Ascending aorta (tissue), 2 donors: ENCODE measurements at regions of chr2 and their contacts with region 1.

Region 1: DNA sequence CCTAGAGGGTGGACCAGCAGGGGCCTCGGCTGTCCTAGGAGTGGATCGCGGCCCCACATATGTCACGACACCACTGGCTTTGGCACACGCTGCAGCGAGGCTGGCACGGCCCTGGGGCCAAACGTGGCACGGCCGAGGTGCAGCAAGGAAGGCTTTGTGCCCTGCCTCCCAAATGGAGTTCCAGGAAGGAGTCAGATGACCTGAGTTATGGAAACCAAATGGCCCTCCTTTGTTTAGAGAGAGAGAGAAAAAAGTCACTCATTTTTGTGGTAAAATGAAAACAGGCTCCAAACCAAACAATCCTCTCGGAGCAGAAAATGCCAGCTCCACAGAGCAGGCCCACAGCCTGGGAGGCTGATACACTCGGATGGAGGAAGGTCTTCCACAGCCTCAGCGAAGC is 105.6 kb downstream of the ANTXR1 start:
- DNase-seq: peak in 1 of 2 donors; percentile 66
- H3K4me3 ChIP-seq: peak overlapping the region in 1 of 2 donors; percentile 28
- H3K27ac ChIP-seq: peak overlapping the region; percentile 90 to 91
- H3K4me1 ChIP-seq: peaks cover 16 to 68% of the 10 kb centered on the region in 2 donors
- H3K27me3 ChIP-seq: no peaks in the 10 kb centered on the region
- CTCF ChIP-seq: no peak

Region 2: DNA sequence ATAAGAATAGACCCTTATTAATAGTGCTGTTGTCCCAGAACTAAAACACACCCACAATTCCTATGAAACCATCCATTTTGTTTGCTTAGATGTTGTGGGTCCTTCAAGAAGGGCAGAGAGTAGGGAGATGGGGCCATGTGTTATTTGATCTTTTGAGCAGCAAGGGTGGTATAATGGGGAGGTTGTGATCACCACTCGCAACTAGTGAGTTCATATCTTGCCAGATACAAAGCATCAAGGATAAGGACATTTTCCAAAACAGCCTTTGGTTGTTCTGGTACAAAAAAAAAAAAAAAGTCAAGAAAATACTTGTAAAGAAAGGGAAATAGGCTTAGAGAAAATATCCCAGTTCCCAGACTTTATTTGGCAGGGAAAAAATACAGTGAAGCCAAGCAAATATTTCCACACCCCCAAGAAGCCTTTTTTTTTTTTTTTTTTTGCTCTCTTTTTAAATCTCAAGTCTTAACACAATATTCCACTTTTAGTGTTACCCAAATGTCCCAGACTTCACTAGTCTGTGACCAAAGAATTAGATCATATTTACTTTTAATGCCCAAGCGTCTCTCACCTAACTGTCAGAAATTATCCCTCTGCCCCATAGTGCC is 51.5 kb before region 1 on chr2:
- intact Hi-C with region 1: loop called (anchors 5 kb)
- DNase-seq: no peak
- H3K4me3 ChIP-seq: no peak overlapping the region
- H3K27ac ChIP-seq: peak overlapping the region; percentile 92
- H3K4me1 ChIP-seq: peaks cover 14 to 56% of the 10 kb centered on the region in 2 donors
- H3K27me3 ChIP-seq: no peaks in the 10 kb centered on the region
- CTCF ChIP-seq: no peak

Region 3: GRCh38 chr2:69095305-69095704 is 23.3 kb before region 1 on chr2:
- intact Hi-C with region 1: loop called (anchors 1 kb)
- DNase-seq: no peak
- H3K4me3 ChIP-seq: no peak overlapping the region
- H3K27ac ChIP-seq: peak overlapping the region; percentile 6 to 9
- H3K4me1 ChIP-seq: peaks cover 0 to 16% of the 10 kb centered on the region in 2 donors
- H3K27me3 ChIP-seq: no peaks in the 10 kb centered on the region
- CTCF ChIP-seq: no peak

Region 4: DNA sequence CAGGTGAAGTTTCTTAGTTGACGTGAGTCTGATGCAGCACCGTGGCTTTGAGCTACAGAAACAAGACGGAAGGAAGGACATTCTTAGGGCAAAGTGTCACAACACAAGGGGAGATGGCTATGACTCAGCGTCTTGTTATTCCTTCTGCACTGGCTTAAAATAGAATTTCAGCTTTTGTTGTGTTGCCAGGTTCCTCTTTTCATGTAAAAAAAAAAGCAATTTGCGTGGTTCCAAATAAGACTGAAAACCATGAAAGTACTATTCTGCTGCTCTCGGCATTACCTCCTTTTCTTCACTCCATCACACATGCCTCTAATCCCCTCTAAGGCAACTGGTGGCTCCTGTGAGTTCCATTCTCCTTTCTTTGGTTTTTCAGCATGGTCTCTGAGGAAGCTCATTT is 44.5 kb after region 1 on chr2:
- intact Hi-C with region 1: loop called (anchors 5 kb)
- DNase-seq: peak in 1 of 2 donors; percentile 75
- H3K4me3 ChIP-seq: peak overlapping the region; percentile 8 to 32
- H3K27ac ChIP-seq: peak overlapping the region; percentile 83 to 86
- H3K4me1 ChIP-seq: peaks cover 10 to 59% of the 10 kb centered on the region in 2 donors
- H3K27me3 ChIP-seq: no peaks in the 10 kb centered on the region
- CTCF ChIP-seq: no peak

Region 5: DNA sequence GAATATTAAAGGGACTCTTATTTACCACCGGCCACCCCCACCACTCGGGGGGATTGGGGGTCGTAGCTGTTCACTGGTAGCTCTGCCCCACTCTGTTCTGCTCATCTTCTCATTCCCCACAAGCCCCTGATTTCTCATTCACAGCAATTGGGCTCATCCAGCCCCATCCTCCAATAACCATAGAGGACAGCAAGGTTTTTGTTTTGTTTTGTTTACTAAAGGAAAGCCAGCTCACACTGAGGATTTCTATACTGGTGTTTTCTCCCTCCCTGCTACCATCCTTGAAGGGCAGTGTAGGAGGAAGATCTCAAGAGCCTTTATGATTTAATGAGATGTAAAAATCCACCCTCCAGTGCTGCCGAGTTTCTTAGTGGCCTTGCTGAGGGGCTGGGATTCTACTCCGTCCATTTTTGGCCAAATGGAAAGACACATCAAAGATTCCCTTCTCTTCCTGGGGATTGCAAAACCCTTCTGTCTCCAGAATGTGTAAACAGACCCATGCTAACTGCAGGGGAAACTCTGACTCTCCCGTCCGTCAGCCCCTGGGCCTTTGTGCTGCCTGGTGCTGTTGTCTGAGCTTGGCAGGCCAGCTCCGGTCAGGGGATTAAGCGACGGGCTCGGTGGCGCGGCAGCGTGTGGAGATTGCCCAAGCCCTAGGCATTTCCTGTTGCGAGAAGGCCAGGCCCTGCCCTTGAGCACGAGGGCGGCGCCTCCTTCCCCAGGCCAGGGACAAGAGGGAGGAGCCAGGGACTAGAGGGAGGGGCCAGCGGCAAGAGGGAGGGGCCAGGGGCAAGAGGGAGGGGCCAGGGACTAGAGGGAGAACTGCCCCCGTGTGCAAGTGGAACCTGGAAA is 59.4 kb after region 1 on chr2:
- intact Hi-C with region 1: loop called (anchors 2 kb)
- DNase-seq: peak; percentile 93 to 97
- H3K4me3 ChIP-seq: peak overlapping the region; percentile 26 to 32
- H3K27ac ChIP-seq: peak overlapping the region; percentile 92 to 96
- H3K4me1 ChIP-seq: peaks cover 13 to 41% of the 10 kb centered on the region in 2 donors
- H3K27me3 ChIP-seq: no peaks in the 10 kb centered on the region
- CTCF ChIP-seq: no peak

Region 6: DNA sequence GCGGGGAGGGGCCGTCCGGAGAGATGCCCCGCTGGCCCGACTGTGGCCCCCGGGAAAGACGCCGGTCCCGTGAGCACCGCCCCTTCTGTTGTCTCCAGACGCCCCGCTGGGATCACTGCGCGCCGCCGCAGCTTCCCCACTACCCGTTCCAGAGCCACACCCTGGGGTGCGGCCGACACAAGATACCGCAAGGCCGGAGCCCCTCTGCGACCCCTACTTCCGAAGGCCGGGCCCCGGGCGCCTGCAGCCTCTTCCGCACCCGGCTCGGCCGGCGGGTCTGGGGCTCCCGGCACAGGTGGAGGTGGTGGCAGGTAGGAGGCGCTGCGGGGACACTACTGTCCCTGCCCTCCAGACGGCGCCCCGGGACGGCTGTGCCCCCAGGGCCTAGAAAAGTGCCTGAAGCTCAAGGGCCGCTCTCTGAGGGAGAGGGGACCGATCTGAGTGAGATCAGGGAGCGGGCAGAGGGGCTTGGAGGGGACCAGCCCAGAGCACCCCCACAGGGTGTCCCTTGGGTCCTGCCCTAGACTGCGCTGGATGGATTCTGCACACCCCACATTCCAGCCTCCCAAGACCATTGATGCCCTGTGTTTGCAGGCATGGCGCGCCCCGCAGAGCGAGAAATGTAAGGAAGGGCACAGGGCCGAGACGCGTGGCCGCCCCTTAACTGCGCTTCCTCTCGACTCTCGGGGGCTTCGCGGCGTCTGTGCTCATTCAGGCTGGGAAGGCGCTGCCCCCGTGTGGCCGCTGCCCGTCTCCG is 188.4 kb after region 1 on chr2:
- intact Hi-C with region 1: loop called (anchors 2 kb)
- DNase-seq: peak; percentile 33 to 92
- H3K4me3 ChIP-seq: peak overlapping the region; percentile 64 to 75
- H3K27ac ChIP-seq: peak overlapping the region; percentile 81 to 82
- H3K4me1 ChIP-seq: peaks cover 4 to 42% of the 10 kb centered on the region in 2 donors
- H3K27me3 ChIP-seq: no peaks in the 10 kb centered on the region
- CTCF ChIP-seq: peak; percentile 78 to 89 (median 86)